HepG2 (cell line): ENCODE measurements at regions of chr3 and their contacts with region 1.

Region 1: GRCh38 chr3:150408221-150409102 is at the start of gene TSC22D2:
- DNase-seq: peak; percentile 80
- ATAC-seq: peak; percentile 80
- H3K4me3 ChIP-seq: peak within 1 kb of the TSS; percentile 89 to 97 (median 90)
- H3K27ac ChIP-seq: peak within 1 kb of the TSS; percentile 99
- H3K4me1 ChIP-seq: peaks cover 9% of the 10 kb centered on the region
- H3K27me3 ChIP-seq: no peaks in the 10 kb centered on the region; a peak in 1 of 5 replicates
- CTCF ChIP-seq: no peak
- EP300 ChIP-seq: no peak
- POLR2A ChIP-seq: peak; percentile 70 to 84; a peak in 3 of 4 replicates
- RAD21 ChIP-seq: peak; percentile 54; the same call in 1 of the 2 replicates
- total RNA-seq, gene TSC22D2: 8.2 and 11.5 TPM in 2 replicates

Region 2: GRCh38 chr3:150286390-150287147 is 121.9 kb before region 1 on chr3:
- CTCF ChIA-PET with region 1: no interaction called
- POLR2A ChIA-PET with region 1: no interaction called
- in situ Hi-C with region 1: no loop called
- intact Hi-C with region 1: loop called (anchors 5 kb)
- DNase-seq: peak; percentile 44
- ATAC-seq: peak; percentile 87
- H3K4me3 ChIP-seq: no peak overlapping the region
- H3K27ac ChIP-seq: no peak overlapping the region
- H3K4me1 ChIP-seq: no peaks in the 10 kb centered on the region
- H3K27me3 ChIP-seq: no peaks in the 10 kb centered on the region
- CTCF ChIP-seq: peak; percentile 63
- EP300 ChIP-seq: no peak
- POLR2A ChIP-seq: no peak
- RAD21 ChIP-seq: peak; percentile 31; the same call in 1 of the 2 replicates

Region 3: DNA sequence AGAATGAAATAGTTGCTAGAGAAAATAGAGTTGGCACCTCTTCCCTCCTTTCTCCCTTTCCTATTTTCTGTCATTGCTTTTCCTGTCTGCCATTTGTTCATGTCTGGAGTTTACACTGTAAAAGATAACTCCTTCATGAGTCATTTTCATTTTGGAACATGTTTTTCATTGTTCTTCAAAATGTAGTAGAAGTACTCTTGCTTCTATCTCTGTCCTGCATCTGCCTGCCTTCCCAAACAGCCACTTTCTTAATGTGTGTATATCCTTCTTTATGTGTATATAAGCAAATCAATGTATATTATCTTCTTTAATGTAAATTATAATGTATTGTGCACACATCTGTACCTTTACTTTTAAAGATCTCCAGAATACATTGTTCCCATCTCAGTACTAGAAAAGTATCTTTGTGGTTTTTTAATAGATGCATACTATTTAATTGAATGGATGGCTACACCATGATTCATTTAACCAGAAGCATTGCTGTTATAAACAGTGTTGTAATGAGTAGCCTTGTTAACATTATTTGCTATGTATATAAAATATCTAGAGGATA is 40.8 kb after region 1 on chr3:
- CTCF ChIA-PET with region 1: no interaction called
- POLR2A ChIA-PET with region 1: no interaction called
- in situ Hi-C with region 1: no loop called
- intact Hi-C with region 1: loop called (anchors 5 kb)
- DNase-seq: no peak
- ATAC-seq: no peak
- H3K4me3 ChIP-seq: no peak overlapping the region
- H3K27ac ChIP-seq: no peak overlapping the region
- H3K4me1 ChIP-seq: peaks cover 4% of the 10 kb centered on the region; the same call in 1 of the 2 replicates
- H3K27me3 ChIP-seq: no peaks in the 10 kb centered on the region
- CTCF ChIP-seq: no peak
- EP300 ChIP-seq: no peak
- POLR2A ChIP-seq: no peak
- RAD21 ChIP-seq: no peak

Region 4: GRCh38 chr3:150546226-150547044 is 138.0 kb after region 1 on chr3 and contains the starts of genes EIF2A and SERP1:
- CTCF ChIA-PET with region 1: no interaction called
- POLR2A ChIA-PET with region 1: interaction called, 10 read pairs
- in situ Hi-C with region 1: no loop called
- intact Hi-C with region 1: loop called (anchors 5 kb)
- DNase-seq: peak; percentile 97
- ATAC-seq: peak; percentile 98
- H3K4me3 ChIP-seq: peak within 1 kb of the TSS; percentile 94 to 99 (median 97)
- H3K27ac ChIP-seq: peak within 1 kb of the TSS; percentile 97
- H3K4me1 ChIP-seq: peaks cover 60% of the 10 kb centered on the region
- H3K27me3 ChIP-seq: peaks cover 0 to 7% of the 10 kb centered on the region in 2 experiments; a peak in 1 of 5 replicates
- CTCF ChIP-seq: peak; percentile 11; the same call in 1 of the 2 replicates
- EP300 ChIP-seq: peak in 1 of 2 experiments; percentile 13; a peak in 1 of 4 replicates
- POLR2A ChIP-seq: peak; percentile 93 to 97
- RAD21 ChIP-seq: peak; percentile 57; the same call in 1 of the 2 replicates
- total RNA-seq, gene EIF2A: 124 and 181 TPM in 2 replicates
- total RNA-seq, gene SERP1: 95.0 and 108 TPM in 2 replicates

Region 5: GRCh38 chr3:150763122-150763841 is 354.8 kb after region 1 on chr3 and contains the start of gene SIAH2:
- CTCF ChIA-PET with region 1: no interaction called
- POLR2A ChIA-PET with region 1: interaction called, 10 read pairs
- in situ Hi-C with region 1: no loop called
- intact Hi-C with region 1: loop called (anchors 10 kb)
- DNase-seq: peak; percentile 92
- ATAC-seq: peak; percentile 88
- H3K4me3 ChIP-seq: peak within 1 kb of the TSS; percentile 97 to 100 (median 98)
- H3K27ac ChIP-seq: peak within 1 kb of the TSS; percentile 99
- H3K4me1 ChIP-seq: peaks cover 59% of the 10 kb centered on the region
- H3K27me3 ChIP-seq: no peaks in the 10 kb centered on the region; a peak in 2 of 5 replicates
- CTCF ChIP-seq: peak; percentile 35; the same call in 1 of the 2 replicates
- EP300 ChIP-seq: peak in 1 of 2 experiments; percentile 0; a peak in 1 of 4 replicates
- POLR2A ChIP-seq: peak; percentile 84 to 90
- RAD21 ChIP-seq: peak; percentile 74
- total RNA-seq, gene SIAH2: 71.8 and 79.5 TPM in 2 replicates